ENCODE measurements at regions of chr5 and their contacts with region 1.

Region 1: DNA sequence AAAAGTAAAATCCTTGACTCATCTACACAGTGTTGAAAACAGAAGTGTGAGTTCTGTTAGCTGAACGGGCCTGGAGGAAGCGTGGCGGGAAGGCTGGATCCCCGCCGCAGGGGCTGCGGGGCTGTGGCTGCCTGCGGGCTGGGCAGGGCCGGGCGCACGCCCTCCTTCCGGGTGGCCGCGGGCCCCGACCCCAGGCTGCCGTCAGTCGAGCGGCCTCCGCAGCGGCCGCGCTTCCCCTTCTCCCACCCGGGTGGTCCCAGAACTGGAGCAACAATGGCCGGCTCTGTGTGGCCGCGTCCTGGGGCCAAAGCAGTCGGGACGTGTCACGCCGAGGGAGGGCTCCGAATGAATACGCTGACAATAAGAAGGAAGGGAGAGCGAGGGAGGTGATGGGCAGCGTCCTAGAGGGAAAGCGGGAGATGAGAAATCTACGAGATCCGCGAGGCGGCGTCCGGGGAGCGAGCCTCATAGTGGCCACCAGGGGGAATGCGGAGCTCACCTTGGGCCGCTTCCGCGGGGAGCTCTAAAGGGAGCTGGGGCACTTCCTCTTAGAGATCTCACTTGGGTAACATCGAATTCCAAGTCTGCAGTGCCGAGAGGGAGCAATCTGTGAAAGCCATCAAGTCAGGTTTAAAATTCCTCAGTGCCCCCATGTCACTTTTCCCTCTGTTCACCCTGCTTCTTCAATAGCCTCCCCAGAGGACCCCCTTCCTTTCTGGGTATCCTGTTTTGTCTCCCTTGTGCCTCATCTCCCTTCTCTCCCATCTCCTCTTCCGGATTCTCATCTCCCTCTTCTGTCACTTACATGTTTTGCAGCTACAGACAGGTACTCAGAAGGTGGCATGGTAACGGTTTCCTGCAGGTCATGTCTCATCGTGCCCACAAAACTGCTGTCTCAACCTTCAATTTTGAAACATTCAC is 83.9 kb downstream of the SLC1A3 start:
- DNase-seq: peak; percentile 88
- H3K27ac ChIP-seq: peak overlapping the region; percentile 89
- CTCF ChIP-seq: peak; percentile 94

Region 2: GRCh38 chr5:36241631-36242533 is 448.4 kb before region 1 on chr5 and contains the start of gene NADK2:
- CTCF ChIA-PET with region 1: interaction called, 13 read pairs
- POLR2A ChIA-PET with region 1: no interaction called
- DNase-seq: peak; percentile 96
- H3K27ac ChIP-seq: peak within 1 kb of the TSS; percentile 91
- CTCF ChIP-seq: peak; percentile 83

Region 3: GRCh38 chr5:36414869-36415282 is 275.4 kb before region 1 on chr5:
- CTCF ChIA-PET with region 1: interaction called, 16 read pairs
- POLR2A ChIA-PET with region 1: interaction called, 4 read pairs
- DNase-seq: peak; percentile 58
- H3K27ac ChIP-seq: no peak overlapping the region
- CTCF ChIP-seq: peak; percentile 76

Region 4: DNA sequence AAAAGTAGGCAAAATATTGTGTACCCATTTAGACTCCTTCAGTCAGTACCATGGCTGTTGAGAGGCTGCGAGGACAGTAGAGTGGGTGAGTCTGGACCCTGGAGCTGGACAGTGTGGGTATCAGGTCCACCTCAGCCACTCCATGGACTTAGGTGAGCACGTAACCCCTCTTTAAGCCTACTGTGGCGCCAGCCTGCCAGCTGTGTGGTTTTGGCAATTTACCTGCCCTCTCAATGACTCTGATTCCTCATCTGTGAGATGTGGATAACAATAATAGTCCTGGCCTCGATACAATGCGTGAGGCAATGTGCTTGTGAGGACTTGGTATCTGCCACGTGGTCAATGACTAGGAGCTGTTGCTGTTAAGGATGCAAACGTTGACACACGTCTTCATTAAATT is 66.0 kb before region 1 on chr5:
- CTCF ChIA-PET with region 1: no interaction called
- POLR2A ChIA-PET with region 1: no interaction called
- DNase-seq: no peak
- H3K27ac ChIP-seq: no peak overlapping the region
- CTCF ChIP-seq: no peak